Ascending aorta (tissue), 2 donors: ENCODE measurements at regions of chr7 and their contacts with region 1.

Region 1: GRCh38 chr7:71615017-71615416 is 483.1 kb downstream of the GALNT17 start:
- DNase-seq: peak; percentile 29 to 84
- H3K4me3 ChIP-seq: no peak overlapping the region
- H3K27ac ChIP-seq: peak overlapping the region; percentile 67 to 74
- H3K4me1 ChIP-seq: peaks cover 11 to 28% of the 10 kb centered on the region in 2 donors
- H3K27me3 ChIP-seq: no peaks in the 10 kb centered on the region
- CTCF ChIP-seq: peak in 2 of 3 experiments; percentile 11 to 26

Region 2: DNA sequence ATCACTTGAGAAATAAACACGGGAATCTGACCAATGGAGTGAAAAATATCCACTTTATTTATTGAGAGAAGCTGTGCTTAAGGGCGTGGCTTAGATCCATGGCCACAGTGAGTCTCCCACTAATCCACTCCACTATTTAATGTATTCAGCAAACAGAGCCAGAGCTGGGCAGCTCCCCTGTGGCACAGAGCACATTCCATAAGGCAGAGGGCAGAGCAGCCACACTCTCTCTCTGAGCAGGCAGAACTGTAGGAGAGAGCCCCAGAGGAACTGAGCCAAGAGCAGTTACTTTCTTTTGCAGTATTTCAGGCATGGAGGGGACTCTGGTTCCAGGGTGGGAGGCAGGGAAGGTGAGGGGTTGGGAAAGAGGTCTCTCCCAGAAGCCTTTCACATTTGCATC is 377.1 kb before region 1 on chr7:
- intact Hi-C with region 1: loop called (anchors 5 kb)
- DNase-seq: peak in 1 of 2 donors; percentile 72
- H3K4me3 ChIP-seq: no peak overlapping the region
- H3K27ac ChIP-seq: peak overlapping the region; percentile 79 to 84
- H3K4me1 ChIP-seq: peaks cover 0 to 21% of the 10 kb centered on the region in 2 donors
- H3K27me3 ChIP-seq: no peaks in the 10 kb centered on the region
- CTCF ChIP-seq: peak in 2 of 3 experiments; percentile 49 to 59

Region 3: DNA sequence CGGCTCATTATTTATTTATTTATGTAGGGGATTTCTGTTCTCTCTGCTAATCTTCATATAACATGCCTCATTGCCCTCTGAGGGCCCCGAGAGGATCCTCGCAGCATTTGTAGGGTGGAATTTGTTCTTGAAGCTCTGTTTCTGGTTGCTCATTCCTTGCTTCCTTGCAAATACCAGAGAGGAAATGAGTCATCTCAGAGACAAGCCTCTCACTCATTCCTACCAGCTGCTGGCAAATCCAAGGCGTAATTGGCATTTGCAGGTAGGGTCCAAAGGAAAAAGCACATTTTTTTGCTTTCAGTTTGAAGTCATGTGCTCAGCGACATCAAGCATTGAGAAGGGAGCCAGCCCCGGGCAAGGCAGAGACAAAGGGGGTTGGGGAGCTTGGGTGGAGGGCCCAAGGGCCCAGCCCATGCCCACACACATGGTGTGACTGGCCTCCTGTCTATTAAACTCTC is 18.6 kb after region 1 on chr7:
- intact Hi-C with region 1: loop called (anchors 2 kb)
- DNase-seq: peak in 1 of 2 donors; percentile 64
- H3K4me3 ChIP-seq: peak overlapping the region in 1 of 2 donors; percentile 30
- H3K27ac ChIP-seq: peak overlapping the region; percentile 50 to 70
- H3K4me1 ChIP-seq: peaks cover 0 to 18% of the 10 kb centered on the region in 2 donors
- H3K27me3 ChIP-seq: no peaks in the 10 kb centered on the region
- CTCF ChIP-seq: no peak